Ovary (tissue), 10 donors: ENCODE measurements at regions of chr7 and their contacts with region 1.

Region 1: DNA sequence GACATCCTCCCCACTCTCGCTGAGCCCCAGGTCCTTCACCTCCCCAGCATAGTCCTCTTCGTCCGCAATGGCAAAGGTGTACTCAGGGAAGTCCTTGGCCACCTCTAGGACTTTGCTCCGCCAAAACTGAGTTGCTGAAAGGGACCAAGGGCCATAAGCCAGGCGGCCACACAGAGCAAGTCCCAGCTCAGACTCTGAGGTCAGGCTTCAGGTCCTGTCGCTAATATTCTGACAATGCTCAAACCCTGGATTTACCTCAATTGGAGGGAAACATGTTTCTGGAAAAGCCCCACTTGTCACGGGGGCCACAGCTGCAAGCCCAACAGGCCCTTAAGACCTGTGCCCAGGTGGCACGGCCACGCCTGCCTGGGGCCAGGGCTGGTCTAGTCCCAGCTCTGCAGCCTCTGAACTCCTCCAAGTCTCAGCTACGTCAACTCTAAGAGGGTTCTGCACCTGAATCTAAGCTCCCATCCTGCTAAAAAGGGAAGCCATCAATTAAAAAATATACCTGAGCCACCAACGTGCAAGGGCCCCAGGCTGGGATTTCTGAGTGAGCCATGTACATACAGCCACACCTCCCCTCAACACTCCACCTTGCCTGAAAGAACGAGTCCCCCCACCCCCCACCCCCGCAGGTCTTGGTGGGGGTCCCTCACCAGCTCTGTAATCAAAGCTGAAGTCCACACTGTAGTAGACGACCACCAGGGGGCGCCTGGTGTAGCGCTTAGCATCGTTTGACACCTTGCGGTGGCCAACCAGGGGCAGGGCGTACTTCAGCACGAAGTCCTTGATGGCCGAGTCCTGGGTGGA is 22.9 kb downstream of the PDIA4 start:
- DNase-seq: peak; percentile 81 to 90 (median 88)
- H3K4me3 ChIP-seq: no peak overlapping the region
- H3K27ac ChIP-seq: no peak overlapping the region
- H3K4me1 ChIP-seq: no peaks in the 10 kb centered on the region
- H3K27me3 ChIP-seq: no peaks in the 10 kb centered on the region
- CTCF ChIP-seq: peak; percentile 77 to 88 (median 83)
- EP300 ChIP-seq: no peak
- POLR2A ChIP-seq: no peak

Region 2: GRCh38 chr7:148782757-148783456 is 222.5 kb before region 1 on chr7:
- intact Hi-C with region 1: no loop called
- DNase-seq: no peak
- H3K4me3 ChIP-seq: no peak overlapping the region
- H3K27ac ChIP-seq: no peak overlapping the region
- H3K4me1 ChIP-seq: peaks cover 1% of the 10 kb centered on the region
- H3K27me3 ChIP-seq: no peaks in the 10 kb centered on the region
- CTCF ChIP-seq: no peak
- EP300 ChIP-seq: no peak
- POLR2A ChIP-seq: no peak

Region 3: DNA sequence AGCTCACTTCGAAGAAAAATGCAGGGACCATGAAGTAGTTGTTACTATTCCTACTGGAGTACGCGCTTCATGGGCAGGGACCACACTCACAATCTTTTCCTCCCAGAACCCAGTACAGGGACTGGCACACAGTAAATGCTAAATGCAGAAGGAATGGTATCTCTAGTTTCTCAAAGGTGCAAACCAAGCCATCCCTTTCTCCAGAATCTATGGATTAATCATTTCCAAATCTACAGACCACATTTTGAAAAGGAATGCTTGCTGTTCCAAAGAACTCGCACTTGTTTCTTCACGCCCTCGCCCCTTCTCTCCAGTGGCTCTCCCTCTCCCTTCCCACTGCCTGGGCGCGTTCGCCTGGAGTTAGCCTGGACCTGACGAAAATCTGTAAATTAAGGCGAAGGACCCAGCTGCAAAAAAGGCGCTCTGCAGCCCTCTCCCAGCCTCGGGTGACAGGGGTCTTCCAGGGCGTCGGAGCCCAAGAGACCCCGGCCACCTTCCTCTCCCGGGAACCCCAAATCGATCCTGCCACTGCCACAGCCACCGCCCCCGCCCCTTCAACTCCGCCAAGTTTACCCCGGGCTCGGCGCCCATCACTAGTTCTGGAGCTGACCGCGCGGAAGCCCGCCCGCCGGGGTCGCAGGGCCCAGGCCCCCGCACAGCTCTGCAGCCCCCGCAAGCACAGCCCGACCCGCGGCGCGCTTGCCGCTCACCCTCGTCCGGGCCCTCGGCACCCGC is 22.3 kb after region 1 on chr7:
- intact Hi-C with region 1: loop called in 1 of 4 experiments (anchors 2 kb)
- DNase-seq: no peak
- H3K4me3 ChIP-seq: peak overlapping the region; percentile 81
- H3K27ac ChIP-seq: peak overlapping the region; percentile 65 to 94
- H3K4me1 ChIP-seq: peaks cover 6% of the 10 kb centered on the region
- H3K27me3 ChIP-seq: no peaks in the 10 kb centered on the region
- CTCF ChIP-seq: no peak
- EP300 ChIP-seq: no peak
- POLR2A ChIP-seq: no peak

Region 4: DNA sequence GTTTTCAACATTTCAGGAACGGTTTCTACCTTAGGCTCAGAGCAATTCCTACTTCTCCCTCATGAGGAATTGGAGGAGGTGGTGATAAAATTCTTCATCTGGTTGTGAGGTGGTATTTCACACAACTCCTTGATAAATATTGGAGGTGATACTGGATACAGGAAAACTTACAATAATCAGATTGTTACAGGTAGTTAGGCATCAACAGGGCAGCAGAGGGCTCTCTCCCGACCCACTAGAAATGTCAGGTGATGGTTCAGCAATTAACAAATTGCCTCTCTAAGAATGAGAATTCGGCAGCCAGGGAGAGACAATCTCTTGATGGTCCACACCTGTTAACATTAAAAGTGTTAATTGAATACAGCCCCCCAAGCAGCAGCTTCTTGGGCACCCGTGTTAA is 62.4 kb after region 1 on chr7:
- intact Hi-C with region 1: loop called (anchors 2 to 10 kb)
- DNase-seq: no peak
- H3K4me3 ChIP-seq: no peak overlapping the region
- H3K27ac ChIP-seq: no peak overlapping the region
- H3K4me1 ChIP-seq: no peaks in the 10 kb centered on the region
- H3K27me3 ChIP-seq: no peaks in the 10 kb centered on the region
- CTCF ChIP-seq: no peak
- EP300 ChIP-seq: no peak
- POLR2A ChIP-seq: no peak

Region 5: GRCh38 chr7:149090397-149091195 is 85.2 kb after region 1 on chr7 and contains the start of gene ZNF786:
- intact Hi-C with region 1: loop called (anchors 2 to 10 kb)
- DNase-seq: peak; percentile 91 to 95 (median 94)
- H3K4me3 ChIP-seq: peak within 1 kb of the TSS; percentile 93
- H3K27ac ChIP-seq: peak within 1 kb of the TSS; percentile 93 to 96
- H3K4me1 ChIP-seq: no peaks in the 10 kb centered on the region
- H3K27me3 ChIP-seq: no peaks in the 10 kb centered on the region
- CTCF ChIP-seq: peak; percentile 96 to 98 (median 97)
- EP300 ChIP-seq: no peak
- POLR2A ChIP-seq: peak; percentile 83
- total RNA-seq, gene ZNF786: 3.9 to 11.6 (median 8.7) TPM